ENCODE measurements at regions of chr19 and their contacts with region 1.

Region 1: DNA sequence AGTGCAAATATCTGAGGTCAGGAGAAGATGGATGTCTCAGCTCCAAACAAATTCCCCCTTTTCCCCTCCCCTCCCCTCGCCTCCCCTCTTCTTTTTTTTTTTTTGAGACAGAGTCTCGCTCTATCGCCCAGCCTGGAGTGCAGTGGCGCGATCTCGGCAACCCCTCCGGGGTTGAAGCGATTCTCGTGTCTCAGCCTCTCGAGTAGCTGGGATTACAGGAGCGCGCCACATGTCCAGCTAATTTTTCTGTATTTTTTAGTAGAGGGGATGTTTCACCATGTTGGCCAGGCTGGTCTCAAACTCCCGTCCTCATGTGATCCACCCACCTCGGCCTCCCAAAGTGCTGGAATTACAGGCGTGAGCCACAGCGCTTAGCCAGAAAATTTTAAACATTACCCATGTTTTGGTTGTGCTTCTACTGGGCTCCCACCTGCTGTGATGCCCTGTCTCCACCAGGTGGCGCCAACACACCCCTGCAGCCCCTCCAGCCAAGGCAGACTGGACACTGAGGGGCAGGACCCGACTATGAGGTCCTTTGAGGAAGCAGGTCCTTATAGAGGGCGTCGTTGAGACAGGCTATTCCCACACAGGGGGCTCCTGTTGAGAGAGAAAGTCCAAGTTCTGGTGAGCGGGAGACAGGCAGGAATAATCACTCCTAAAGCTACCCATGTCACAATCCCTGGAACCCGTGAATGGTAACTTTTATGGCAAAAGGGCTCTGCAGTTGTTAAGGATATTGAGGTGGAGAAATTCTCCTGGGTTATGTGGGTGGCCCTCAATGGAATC is 6.3 kb downstream of the ERICH4 start:
- DNase-seq: peak; percentile 40 to 95 (median 74)

Region 2: GRCh38 chr19:41112728-41113290 is 336.5 kb before region 1 on chr19:
- intact Hi-C with region 1: no loop called
- DNase-seq: no peak

Region 3: GRCh38 chr19:41373993-41374392 is 75.3 kb before region 1 on chr19:
- intact Hi-C with region 1: no loop called
- DNase-seq: peak; percentile 71 to 97 (median 84)

Region 4: DNA sequence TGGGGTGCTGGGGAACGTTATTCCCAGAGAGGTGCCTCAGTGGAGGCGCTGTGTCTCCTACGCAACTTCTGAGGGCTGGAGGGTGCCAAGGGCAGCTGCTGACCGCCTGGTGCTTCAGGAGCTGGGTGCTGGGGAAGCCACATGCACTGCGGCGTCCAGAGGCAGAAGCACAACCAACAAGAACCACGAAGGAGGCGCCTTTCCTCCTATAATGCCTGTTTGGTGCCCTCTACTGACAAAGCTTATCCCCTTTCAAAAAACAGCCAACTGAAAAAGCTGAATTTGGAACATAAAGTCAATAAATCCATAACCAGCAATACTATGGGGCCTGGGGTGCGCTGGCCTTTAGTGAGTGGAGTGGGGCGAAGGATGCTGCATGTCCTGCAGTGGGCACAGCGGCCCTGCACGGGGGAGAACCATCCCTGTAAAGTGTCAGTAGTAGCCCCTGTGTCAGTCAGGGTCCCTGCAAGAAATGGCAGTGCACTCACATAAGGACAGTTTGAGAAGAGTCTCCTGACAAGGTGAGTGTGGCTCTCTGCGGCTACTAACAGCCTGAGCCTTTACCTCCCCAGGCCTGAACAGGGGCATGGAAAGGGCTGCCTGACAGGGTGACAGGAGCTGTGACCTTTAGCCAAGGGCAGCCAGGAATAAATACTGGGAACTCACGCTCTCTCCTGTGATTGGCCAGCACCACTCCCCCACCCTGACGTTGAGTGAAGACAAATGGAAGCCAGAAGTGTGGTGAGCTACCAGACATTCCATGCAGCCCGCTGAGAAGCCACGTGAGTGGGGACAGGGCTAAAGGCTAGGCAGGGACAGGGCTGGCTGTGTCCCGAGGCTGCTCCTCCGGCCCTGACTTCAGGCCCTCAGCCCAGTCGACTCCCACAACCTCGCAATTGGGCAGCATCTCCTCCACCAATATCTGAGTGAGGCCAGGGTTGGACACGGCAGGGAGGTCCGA is 17.6 kb before region 1 on chr19:
- intact Hi-C with region 1: no loop called
- DNase-seq: no peak

Region 5: GRCh38 chr19:41563854-41564514 is 114.7 kb after region 1 on chr19:
- intact Hi-C with region 1: loop called (anchors 2 kb)
- DNase-seq: no peak

Region 6: DNA sequence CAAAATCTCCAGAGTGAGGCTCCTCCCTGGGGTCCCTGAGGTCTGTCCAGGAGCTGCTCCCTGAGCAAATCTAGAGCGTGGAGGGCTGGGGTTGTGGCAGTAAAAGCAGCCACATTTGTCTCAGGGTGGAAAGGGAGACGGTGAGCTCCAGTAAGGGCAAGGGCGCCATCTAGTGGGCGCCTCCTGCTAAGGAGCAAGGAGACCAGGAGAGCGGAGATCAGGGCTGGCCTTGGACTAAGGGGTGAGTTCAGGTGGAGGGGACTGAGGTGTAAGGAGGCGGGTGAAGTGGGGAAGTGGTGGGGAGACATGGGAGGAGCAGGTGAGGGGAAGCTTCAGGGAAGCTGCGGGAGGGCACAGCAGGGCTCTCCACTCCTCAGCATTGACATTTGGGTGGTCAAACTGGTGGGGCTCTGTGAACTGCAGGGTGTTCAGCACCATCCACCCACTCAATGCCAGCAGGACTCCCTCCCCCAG is 121.4 kb after region 1 on chr19:
- intact Hi-C with region 1: loop called (anchors 1 kb)
- DNase-seq: peak; percentile 26 to 95 (median 68)